ENCODE measurements at regions of chr9 and their contacts with region 1.

Region 1: DNA sequence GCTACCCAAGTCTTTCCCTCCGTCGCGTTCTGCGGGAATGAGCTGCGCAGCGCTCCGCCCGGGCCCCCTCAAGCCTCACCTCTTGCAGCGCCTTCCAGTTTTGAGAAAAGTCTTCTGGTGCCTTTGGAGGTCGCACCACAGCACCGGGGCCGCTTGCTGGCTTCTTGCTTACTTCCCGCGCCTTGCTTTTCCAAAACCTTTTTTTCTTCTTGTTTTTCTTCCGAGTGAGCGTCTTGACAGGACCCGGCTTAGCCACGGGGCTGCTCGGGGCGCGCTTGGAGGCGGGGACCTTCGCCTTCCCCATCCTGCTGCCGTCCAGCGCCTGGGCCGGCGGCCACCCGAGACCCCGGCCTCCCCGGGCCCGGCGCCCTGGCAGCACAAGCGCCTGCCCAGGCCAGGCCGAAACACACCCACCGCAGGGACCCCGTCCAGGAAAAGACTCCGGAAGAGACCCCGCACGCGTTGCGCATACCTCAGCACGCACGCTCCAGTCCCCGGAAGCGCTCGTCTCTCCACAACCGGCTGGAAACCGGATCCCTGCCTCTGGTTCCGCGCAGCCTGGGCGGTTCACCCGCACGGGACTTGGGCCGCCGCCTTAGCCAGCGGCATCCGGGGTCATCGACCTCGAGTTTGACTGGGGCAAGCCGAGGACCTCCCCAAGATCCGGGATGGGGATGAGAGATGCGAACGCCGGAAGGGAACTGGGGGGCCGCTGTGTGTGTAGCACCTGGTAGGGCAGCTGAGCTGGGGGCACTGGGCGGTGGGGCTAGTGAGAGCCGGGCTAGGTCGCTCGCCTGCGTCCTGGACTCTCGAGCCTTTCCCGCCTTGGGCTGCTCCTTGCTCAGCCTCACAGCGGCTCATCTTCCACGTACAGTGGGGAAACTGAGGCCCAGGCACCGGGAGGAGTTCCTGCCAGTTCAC is at the start of gene REXO4:
- DNase-seq: peak; percentile 73 to 91 (median 81)
- ATAC-seq: peak; percentile 88
- H3K4me3 ChIP-seq: peak within 1 kb of the TSS; percentile 80 to 88
- H3K4me3 Mint-ChIP-seq: peak within 1 kb of the TSS; percentile 87
- H3K27ac ChIP-seq: peak within 1 kb of the TSS; percentile 68 to 89
- H3K27ac Mint-ChIP-seq: peak within 1 kb of the TSS; percentile 90
- H3K4me1 ChIP-seq: peaks cover 23% of the 10 kb centered on the region
- H3K4me1 Mint-ChIP-seq: peaks cover 54% of the 10 kb centered on the region
- H3K27me3 ChIP-seq: no peaks in the 10 kb centered on the region
- H3K27me3 Mint-ChIP-seq: no peaks in the 10 kb centered on the region
- CTCF ChIP-seq: no peak
- total RNA-seq, gene REXO4: 22.5 to 24.0 TPM

Region 2: DNA sequence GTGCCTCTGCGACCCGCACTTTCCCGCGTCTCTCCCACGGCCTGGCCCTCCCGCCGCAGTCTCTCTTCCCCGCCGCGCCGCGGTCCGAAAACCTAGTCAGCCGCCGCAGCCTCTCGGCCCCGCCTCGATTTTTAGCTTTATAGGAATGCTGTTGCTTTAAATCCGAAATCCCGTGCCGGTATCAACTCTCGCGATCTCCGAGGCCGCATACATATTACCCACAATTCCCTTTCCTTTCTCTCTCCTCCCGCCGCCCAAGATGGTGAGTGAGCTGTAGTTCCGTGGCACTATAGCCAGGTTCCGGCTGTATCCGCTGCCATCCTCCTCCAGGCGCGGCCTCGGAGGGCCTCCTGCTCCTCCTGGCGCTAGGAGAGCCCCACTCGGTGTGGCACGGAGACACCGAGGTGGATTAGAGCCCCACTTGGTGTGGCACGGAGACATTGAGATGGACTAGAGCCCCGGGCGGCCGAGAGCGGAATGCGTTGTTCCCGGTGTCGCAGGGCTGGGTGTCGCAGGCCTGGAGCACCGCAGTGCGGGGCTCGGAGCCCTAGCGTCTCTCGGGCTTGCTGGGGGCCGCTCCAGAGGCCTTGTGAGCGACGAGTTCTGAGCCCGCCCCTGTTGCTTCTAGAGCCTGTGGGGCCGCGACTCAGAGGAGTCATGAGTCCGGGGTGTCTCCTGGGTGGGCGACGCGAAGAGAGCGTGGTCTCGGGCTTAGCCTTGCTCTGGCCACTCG is 69.7 kb before region 1 on chr9 and contains the starts of genes MED22 and RPL7A:
- CTCF ChIA-PET with region 1: no interaction called
- POLR2A ChIA-PET with region 1: interaction called, 3 read pairs
- intact Hi-C with region 1: loop called (anchors 1 kb)
- DNase-seq: peak; percentile 80 to 97 (median 91)
- ATAC-seq: peak; percentile 85
- H3K4me3 ChIP-seq: peak within 1 kb of the TSS; percentile 95 to 100
- H3K4me3 Mint-ChIP-seq: peak within 1 kb of the TSS; percentile 100
- H3K27ac ChIP-seq: peak within 1 kb of the TSS; percentile 87 to 93
- H3K27ac Mint-ChIP-seq: peak within 1 kb of the TSS; percentile 98
- H3K4me1 ChIP-seq: peaks cover 23% of the 10 kb centered on the region
- H3K4me1 Mint-ChIP-seq: peaks cover 39% of the 10 kb centered on the region
- H3K27me3 ChIP-seq: no peaks in the 10 kb centered on the region
- H3K27me3 Mint-ChIP-seq: no peaks in the 10 kb centered on the region
- CTCF ChIP-seq: no peak
- total RNA-seq, gene MED22: 17.8 to 21.2 TPM
- total RNA-seq, gene RPL7A: 2,612 to 2,623 TPM

Region 3: DNA sequence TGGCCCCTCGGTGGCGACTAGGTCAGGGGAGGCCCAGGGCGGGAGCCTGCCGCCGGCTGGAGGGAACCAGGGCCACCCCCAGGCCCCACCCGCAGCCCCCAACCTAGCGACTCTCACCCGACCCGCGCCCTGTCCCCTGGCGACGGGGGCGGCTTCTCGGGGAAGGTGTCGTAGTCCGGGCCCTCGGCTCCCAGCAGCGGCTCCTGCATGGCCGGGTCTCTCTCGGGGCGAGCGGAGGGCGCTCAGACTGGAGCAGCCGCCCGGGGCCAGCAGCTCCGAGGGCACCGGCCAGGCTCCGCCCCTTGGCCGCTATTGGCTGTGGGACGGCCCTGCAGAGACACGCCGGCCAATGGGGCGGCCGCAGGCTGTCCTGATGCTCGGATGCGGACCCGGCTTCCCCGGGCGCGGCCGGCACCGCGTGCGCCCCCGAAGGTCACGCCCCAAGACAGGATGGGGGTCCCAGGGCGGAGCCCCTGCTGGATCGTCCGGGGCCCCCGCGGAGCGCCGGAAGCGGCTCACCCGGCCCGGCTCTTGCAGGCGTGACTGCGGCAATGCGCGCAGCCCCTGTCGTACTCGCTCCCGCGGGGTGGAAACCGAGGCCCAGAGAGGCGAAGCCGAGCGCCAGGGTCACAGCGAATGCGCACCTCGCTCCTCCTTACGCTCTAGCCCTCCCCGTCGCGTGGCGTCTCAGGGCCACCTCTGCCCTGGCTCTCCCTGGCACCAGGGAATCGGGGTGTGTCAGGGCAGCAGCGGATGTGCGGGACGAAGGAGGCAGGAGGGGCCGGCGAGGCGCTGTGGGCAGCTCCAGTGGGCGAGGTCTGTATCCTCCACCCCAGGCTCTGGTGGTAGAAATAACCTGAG is 61.3 kb after region 1 on chr9 and contains the start of gene SLC2A6:
- CTCF ChIA-PET with region 1: no interaction called
- POLR2A ChIA-PET with region 1: interaction called, 5 read pairs
- intact Hi-C with region 1: loop called (anchors 1 to 5 kb)
- DNase-seq: peak; percentile 58 to 92 (median 81)
- ATAC-seq: peak; percentile 96
- H3K4me3 ChIP-seq: peak within 1 kb of the TSS; percentile 62 to 65
- H3K4me3 Mint-ChIP-seq: peak within 1 kb of the TSS; percentile 75
- H3K27ac ChIP-seq: peak within 1 kb of the TSS; percentile 56 to 59
- H3K27ac Mint-ChIP-seq: peak within 1 kb of the TSS; percentile 72
- H3K4me1 ChIP-seq: peaks cover 15% of the 10 kb centered on the region
- H3K4me1 Mint-ChIP-seq: peaks cover 10% of the 10 kb centered on the region
- H3K27me3 ChIP-seq: no peaks in the 10 kb centered on the region
- H3K27me3 Mint-ChIP-seq: no peaks in the 10 kb centered on the region
- CTCF ChIP-seq: no peak
- total RNA-seq, gene SLC2A6: 8.0 to 9.7 TPM

Measured in CD8-positive, alpha-beta T cell (primary cell).